ENCODE measurements at regions of chr2 and their contacts with region 1.

Region 1: DNA sequence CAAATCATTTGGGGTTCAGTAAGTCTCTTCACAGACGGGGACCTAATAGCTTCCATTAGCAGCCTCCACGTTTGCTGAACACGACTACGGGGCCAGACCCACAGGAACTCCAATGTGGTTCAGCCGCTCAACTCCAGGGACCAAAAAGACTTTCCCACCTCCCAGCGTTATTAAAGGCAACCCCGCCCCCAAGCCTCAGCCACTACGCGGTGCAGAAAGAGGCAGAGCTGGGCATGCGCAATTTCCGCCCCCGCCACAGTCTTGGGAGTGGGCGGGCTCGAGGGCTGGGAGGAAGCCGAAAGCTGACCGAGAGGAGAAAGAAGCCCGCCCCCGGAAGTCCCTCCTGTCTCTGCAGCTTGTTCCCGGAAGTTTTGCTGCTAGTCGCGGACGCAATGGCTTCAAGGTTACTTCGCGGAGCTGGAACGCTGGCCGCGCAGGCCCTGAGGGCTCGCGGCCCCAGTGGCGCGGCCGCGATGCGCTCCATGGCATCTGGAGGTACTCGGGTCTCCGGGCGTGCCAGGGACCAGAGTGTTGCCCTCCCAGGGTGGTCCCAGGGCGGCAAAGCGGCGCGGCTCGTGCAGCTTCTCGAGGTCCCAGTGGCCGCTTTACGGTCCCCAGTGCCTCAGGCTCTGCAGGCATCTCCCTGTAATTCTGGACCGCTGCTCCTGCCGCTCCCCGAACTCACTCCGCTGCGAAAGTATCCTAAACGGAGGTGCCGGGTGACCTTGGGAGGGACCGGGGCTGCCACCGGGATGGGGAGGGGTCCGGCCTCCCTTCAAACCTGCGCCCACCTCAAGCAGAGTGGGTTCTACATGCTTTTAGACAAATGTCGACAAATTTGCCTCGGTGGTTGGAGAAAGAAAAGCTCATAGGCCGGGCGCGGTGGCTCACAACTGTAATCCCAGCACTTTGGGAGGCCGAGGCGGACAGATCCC is at the start of gene COX5B:
- DNase-seq: peak; percentile 96 to 99 (median 98)
- ATAC-seq: peak; percentile 96
- H3K4me3 ChIP-seq: peak within 1 kb of the TSS; percentile 97
- H3K4me3 Mint-ChIP-seq: peak within 1 kb of the TSS; percentile 97
- H3K27ac ChIP-seq: peak within 1 kb of the TSS; percentile 84 to 89
- H3K27ac Mint-ChIP-seq: peak within 1 kb of the TSS; percentile 93
- H3K4me1 ChIP-seq: peaks cover 18% of the 10 kb centered on the region
- H3K4me1 Mint-ChIP-seq: peaks cover 31% of the 10 kb centered on the region
- H3K27me3 ChIP-seq: no peaks in the 10 kb centered on the region
- H3K27me3 Mint-ChIP-seq: no peaks in the 10 kb centered on the region
- CTCF ChIP-seq: no peak
- total RNA-seq, gene COX5B: 112 to 121 TPM

Region 2: DNA sequence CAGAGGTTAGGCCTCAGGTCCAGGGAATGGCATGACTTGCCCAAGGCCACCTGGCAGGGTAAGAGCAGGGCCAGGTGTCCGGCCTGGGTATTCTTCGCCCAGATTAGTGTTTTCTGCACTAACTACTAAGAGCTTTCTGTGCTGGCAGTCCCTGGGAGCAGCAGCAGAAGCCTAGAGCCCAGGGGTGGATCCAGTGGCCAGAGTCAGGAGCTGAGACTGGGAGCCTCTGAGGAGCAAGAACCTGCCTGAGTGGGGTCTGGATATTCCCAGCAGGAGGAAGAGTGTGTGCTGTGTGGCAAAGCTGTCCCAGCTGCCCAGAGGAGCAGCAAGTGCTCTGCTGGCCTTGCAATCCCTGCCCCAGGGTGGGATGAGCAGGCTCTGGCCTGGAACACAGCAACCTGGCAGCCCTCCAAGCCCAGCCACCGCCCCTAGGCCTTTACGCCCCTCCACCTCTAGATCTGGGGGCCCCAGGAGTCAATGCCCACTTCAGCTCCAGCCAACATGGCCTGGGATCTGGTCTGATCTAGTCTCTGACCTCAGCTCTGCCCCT is 1580.5 kb before region 1 on chr2:
- CTCF ChIA-PET with region 1: no interaction called
- POLR2A ChIA-PET with region 1: no interaction called
- intact Hi-C with region 1: loop called in 1 of 2 experiments (anchors 10 kb)
- DNase-seq: no peak
- ATAC-seq: no peak
- H3K4me3 ChIP-seq: no peak overlapping the region
- H3K4me3 Mint-ChIP-seq: no peak overlapping the region
- H3K27ac ChIP-seq: no peak overlapping the region
- H3K27ac Mint-ChIP-seq: no peak overlapping the region
- H3K4me1 ChIP-seq: no peaks in the 10 kb centered on the region
- H3K4me1 Mint-ChIP-seq: no peaks in the 10 kb centered on the region
- H3K27me3 ChIP-seq: no peaks in the 10 kb centered on the region
- H3K27me3 Mint-ChIP-seq: no peaks in the 10 kb centered on the region
- CTCF ChIP-seq: no peak

Region 3: GRCh38 chr2:97656905-97657587 is 11.1 kb after region 1 on chr2:
- CTCF ChIA-PET with region 1: interaction called, 6 read pairs
- POLR2A ChIA-PET with region 1: interaction called, 244 read pairs
- intact Hi-C with region 1: loop called in 1 of 2 experiments (anchors 1 kb)
- DNase-seq: no peak
- ATAC-seq: no peak
- H3K4me3 ChIP-seq: no peak overlapping the region
- H3K4me3 Mint-ChIP-seq: no peak overlapping the region
- H3K27ac ChIP-seq: no peak overlapping the region
- H3K27ac Mint-ChIP-seq: no peak overlapping the region
- H3K4me1 ChIP-seq: peaks cover 15% of the 10 kb centered on the region
- H3K4me1 Mint-ChIP-seq: peaks cover 9% of the 10 kb centered on the region
- H3K27me3 ChIP-seq: no peaks in the 10 kb centered on the region
- H3K27me3 Mint-ChIP-seq: no peaks in the 10 kb centered on the region
- CTCF ChIP-seq: no peak

Region 4: GRCh38 chr2:97663965-97664635 is 18.1 kb after region 1 on chr2 and contains the start of gene ACTR1B:
- CTCF ChIA-PET with region 1: interaction called, 29 read pairs
- POLR2A ChIA-PET with region 1: interaction called, 244 read pairs
- intact Hi-C with region 1: loop called (anchors 1 kb)
- DNase-seq: peak; percentile 94 to 99 (median 96)
- ATAC-seq: peak; percentile 86
- H3K4me3 ChIP-seq: peak within 1 kb of the TSS; percentile 96
- H3K4me3 Mint-ChIP-seq: peak within 1 kb of the TSS; percentile 100
- H3K27ac ChIP-seq: peak within 1 kb of the TSS; percentile 93 to 98
- H3K27ac Mint-ChIP-seq: peak within 1 kb of the TSS; percentile 99
- H3K4me1 ChIP-seq: peaks cover 34% of the 10 kb centered on the region
- H3K4me1 Mint-ChIP-seq: peaks cover 31% of the 10 kb centered on the region
- H3K27me3 ChIP-seq: no peaks in the 10 kb centered on the region
- H3K27me3 Mint-ChIP-seq: no peaks in the 10 kb centered on the region
- CTCF ChIP-seq: peak; percentile 66
- total RNA-seq, gene ACTR1B: 89.5 to 92.8 TPM

Region 5: GRCh38 chr2:97718051-97718882 is 72.3 kb after region 1 on chr2:
- CTCF ChIA-PET with region 1: no interaction called
- POLR2A ChIA-PET with region 1: interaction called, 21 read pairs
- intact Hi-C with region 1: no loop called
- DNase-seq: peak; percentile 57 to 89 (median 74)
- ATAC-seq: peak; percentile 88
- H3K4me3 ChIP-seq: peak overlapping the region; percentile 76
- H3K4me3 Mint-ChIP-seq: peak overlapping the region; percentile 89
- H3K27ac ChIP-seq: peak overlapping the region; percentile 75 to 88
- H3K27ac Mint-ChIP-seq: peak overlapping the region; percentile 98
- H3K4me1 ChIP-seq: peaks cover 95% of the 10 kb centered on the region
- H3K4me1 Mint-ChIP-seq: peaks cover 92% of the 10 kb centered on the region
- H3K27me3 ChIP-seq: no peaks in the 10 kb centered on the region
- H3K27me3 Mint-ChIP-seq: no peaks in the 10 kb centered on the region
- CTCF ChIP-seq: no peak

Region 6: DNA sequence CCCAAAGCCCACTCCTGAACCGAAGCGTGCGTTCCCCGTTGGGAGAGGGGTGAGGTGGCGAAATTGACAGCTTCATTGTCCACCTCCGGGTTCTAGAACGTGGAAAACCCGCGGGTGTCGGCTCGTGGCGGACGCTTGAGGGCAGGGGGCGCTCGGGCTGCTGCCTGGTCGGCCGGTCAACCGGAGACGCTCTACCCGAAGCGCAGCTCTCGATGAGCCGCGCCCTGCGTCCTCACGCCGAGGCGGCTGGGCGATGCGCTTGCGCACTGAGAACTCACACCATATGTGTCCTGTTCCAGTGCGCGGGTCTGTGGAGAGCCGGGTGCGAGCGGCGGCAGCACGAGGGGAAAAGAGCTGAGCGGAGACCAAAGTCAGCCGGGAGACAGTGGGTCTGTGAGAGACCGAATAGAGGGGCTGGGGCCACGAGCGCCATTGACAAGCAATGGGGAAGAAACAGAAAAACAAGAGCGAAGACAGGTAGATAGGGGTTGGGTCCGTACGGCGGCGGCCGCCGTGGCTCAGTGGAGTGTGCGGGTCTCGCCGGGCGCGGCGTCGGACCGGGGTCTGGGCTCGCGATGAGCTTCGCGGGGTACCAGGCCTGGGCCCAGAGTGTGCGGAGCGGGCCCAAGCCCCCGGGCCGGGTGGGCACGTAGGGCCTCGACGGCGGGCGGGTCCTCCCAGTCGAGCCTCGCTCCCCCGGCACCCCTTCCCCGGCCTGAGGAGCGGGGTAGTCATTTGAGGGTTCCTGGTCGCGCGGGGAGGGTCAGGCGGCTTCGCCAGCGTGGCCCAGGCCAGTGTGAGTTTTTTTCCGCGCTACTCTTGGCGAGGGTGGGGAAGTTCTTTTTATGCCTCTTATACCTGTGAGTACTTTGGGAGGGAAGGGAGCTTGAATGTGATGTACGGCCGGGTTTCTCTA is 1691.4 kb after region 1 on chr2 and contains the start of gene EIF5B:
- CTCF ChIA-PET with region 1: no interaction called
- POLR2A ChIA-PET with region 1: no interaction called
- intact Hi-C with region 1: loop called in 1 of 2 experiments (anchors 10 kb)
- DNase-seq: peak; percentile 82 to 97 (median 93)
- ATAC-seq: peak; percentile 58
- H3K4me3 ChIP-seq: peak within 1 kb of the TSS; percentile 89
- H3K4me3 Mint-ChIP-seq: no peak within 1 kb of the TSS
- H3K27ac ChIP-seq: peak within 1 kb of the TSS; percentile 72 to 79
- H3K27ac Mint-ChIP-seq: no peak within 1 kb of the TSS
- H3K4me1 ChIP-seq: peaks cover 29% of the 10 kb centered on the region
- H3K4me1 Mint-ChIP-seq: peaks cover 40% of the 10 kb centered on the region
- H3K27me3 ChIP-seq: no peaks in the 10 kb centered on the region
- H3K27me3 Mint-ChIP-seq: no peaks in the 10 kb centered on the region
- CTCF ChIP-seq: peak; percentile 74
- total RNA-seq, gene EIF5B: 27.8 to 33.2 TPM